MCF 10A (cell line): ENCODE measurements at regions of chrX and their contacts with region 1.

Region 1: DNA sequence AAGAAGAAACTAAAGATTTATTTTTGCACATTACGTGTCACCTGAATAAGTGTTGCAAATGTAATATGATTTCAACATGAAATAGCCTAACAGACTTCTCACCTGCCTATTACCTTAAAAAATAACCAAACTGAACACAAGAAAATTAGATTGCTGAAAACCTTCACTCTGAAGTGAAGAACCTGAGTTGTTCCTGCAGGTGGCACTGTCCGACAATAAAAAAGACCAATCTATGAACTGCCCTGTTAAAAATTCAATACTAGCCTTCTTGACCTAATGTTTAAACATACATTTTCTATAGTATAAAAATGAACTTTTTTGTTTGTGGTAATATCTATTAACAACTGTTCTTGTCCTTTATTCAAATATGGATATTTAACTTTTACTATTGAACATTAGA is 69.2 kb upstream of the PNPLA4 start:
- DNase-seq: peak; percentile 57
- H3K4me3 Mint-ChIP-seq: no peak overlapping the region
- H3K27ac Mint-ChIP-seq: no peak overlapping the region
- H3K4me1 Mint-ChIP-seq: no peaks in the 10 kb centered on the region
- H3K27me3 Mint-ChIP-seq: no peaks in the 10 kb centered on the region
- CTCF ChIP-seq: peak; percentile 41

Region 2: DNA sequence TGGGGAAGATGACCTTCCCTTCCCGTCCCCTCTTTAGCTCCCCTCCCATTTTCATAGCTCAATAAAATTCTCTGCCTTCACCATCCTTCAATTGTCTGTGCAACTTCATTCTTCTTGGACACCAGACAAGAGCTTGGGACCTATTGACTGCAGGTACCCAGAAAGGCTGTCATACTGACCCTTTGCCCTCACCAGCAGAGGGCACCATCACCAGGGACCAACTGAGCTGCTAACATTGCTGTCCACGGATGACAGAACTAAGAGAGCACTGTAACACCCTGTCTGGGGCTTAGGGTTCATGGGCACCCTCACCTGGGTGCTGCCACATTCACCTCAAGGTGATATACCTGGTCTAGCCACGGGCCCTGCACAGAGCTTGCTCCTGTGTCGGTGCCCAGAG is 326.9 kb after region 1 on chrX:
- CTCF ChIA-PET with region 1: no interaction called
- POLR2A ChIA-PET with region 1: no interaction called
- intact Hi-C with region 1: loop called (anchors 10 kb)
- DNase-seq: peak; percentile 30
- H3K4me3 Mint-ChIP-seq: no peak overlapping the region
- H3K27ac Mint-ChIP-seq: no peak overlapping the region
- H3K4me1 Mint-ChIP-seq: no peaks in the 10 kb centered on the region
- H3K27me3 Mint-ChIP-seq: no peaks in the 10 kb centered on the region
- CTCF ChIP-seq: peak; percentile 13

Region 3: DNA sequence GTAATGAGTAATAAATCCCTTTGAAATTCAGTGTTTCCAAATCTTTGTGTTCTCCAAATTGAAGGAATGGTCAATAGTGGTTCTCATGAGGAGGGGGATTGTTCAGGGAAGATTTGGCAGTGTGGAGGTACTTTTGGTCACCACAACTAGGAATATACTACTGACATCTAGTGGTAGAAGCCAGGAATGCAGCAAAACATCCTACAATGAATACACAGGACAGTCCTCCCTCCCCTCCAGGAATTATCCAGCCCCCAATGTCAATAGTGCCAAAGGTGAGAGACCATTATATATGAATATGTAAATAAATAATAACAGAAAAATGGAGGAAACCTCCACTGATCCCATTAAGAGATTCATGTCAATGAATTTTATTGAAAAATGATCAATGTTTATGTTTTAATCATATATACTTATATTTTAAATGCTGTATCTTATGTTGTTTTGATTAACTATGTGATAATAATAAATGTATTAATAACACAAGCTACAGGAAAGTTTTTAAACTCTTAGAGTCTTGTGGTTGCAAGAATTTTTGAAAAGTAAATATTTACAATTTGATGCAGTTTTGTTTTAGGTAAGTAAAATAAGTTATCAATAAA is 819.2 kb after region 1 on chrX:
- CTCF ChIA-PET with region 1: interaction called, 7 read pairs
- POLR2A ChIA-PET with region 1: no interaction called
- intact Hi-C with region 1: loop called (anchors 5 kb)
- DNase-seq: peak; percentile 71
- H3K4me3 Mint-ChIP-seq: no peak overlapping the region
- H3K27ac Mint-ChIP-seq: no peak overlapping the region
- H3K4me1 Mint-ChIP-seq: no peaks in the 10 kb centered on the region
- H3K27me3 Mint-ChIP-seq: peaks cover 16% of the 10 kb centered on the region
- CTCF ChIP-seq: peak; percentile 59

Region 4: GRCh38 chrX:9071031-9071650 is 1074.7 kb after region 1 on chrX:
- CTCF ChIA-PET with region 1: no interaction called
- POLR2A ChIA-PET with region 1: no interaction called
- intact Hi-C with region 1: no loop called
- DNase-seq: no peak
- H3K4me3 Mint-ChIP-seq: no peak overlapping the region
- H3K27ac Mint-ChIP-seq: no peak overlapping the region
- H3K4me1 Mint-ChIP-seq: no peaks in the 10 kb centered on the region
- H3K27me3 Mint-ChIP-seq: no peaks in the 10 kb centered on the region
- CTCF ChIP-seq: no peak

Region 5: DNA sequence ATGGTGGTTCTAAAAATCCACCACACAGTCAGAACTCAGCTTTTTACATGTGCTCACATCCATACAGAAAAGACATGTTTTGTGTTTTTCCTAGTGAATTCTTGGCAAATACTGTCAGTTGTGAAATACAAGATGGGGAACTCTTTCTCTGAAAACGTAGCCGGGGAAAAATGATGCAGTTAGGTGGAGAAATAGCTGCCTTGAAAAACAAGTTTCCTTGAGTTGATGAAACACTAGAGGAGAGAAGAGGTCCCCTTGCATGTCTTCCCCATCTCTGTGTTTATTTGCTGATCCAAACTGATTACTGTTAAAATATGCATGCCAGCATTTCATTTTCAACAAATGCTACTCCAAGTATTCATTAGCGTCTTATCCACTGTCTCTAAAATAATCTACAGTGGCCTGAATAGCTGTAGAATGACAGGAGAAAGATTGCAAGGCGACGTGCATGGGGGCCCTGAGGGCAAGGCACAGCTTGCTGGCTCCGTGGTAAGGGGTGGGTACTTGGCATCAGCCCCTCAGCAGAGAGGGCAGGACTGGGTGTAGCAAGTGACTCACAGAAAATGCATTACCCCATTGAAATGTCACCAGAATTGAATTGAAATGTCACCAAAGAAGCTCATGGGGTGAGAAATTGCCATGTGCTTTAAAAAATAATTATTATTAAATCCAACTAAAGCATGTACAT is 1420.4 kb after region 1 on chrX:
- CTCF ChIA-PET with region 1: no interaction called
- POLR2A ChIA-PET with region 1: no interaction called
- intact Hi-C with region 1: no loop called
- DNase-seq: peak; percentile 66
- H3K4me3 Mint-ChIP-seq: no peak overlapping the region
- H3K27ac Mint-ChIP-seq: peak overlapping the region; percentile 85
- H3K4me1 Mint-ChIP-seq: peaks cover 16% of the 10 kb centered on the region
- H3K27me3 Mint-ChIP-seq: no peaks in the 10 kb centered on the region
- CTCF ChIP-seq: no peak